HepG2 (cell line): ENCODE measurements at regions of chr1 and their contacts with region 1.

Region 1: DNA sequence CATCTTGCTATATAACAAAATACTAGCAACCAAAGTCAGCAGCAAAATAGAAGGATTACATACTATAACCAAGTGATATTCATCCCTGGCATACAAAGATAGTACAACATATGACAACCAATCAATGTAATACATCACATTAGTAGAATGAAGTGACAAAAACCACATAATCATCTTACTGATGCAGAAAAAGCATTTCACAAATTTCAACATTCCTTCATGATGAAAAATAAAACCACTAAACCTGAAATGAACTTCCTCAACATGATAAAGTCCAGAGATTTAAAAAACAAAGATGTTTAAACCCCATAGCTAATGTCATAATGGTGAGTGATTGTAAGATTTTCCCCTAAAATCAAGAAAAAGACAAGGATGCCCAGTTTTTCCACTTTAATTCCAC is 18.6 kb downstream of the RO60 start:
- DNase-seq: no peak
- ATAC-seq: no peak
- H3K4me3 ChIP-seq: no peak overlapping the region
- H3K27ac ChIP-seq: no peak overlapping the region
- H3K4me1 ChIP-seq: no peaks in the 10 kb centered on the region
- H3K27me3 ChIP-seq: no peaks in the 10 kb centered on the region
- CTCF ChIP-seq: no peak
- EP300 ChIP-seq: no peak
- POLR2A ChIP-seq: no peak
- RAD21 ChIP-seq: no peak

Region 2: GRCh38 chr1:191870490-191870889 is 1207.5 kb before region 1 on chr1:
- CTCF ChIA-PET with region 1: no interaction called
- POLR2A ChIA-PET with region 1: no interaction called
- in situ Hi-C with region 1: no loop called
- intact Hi-C with region 1: loop called (anchors 5 kb)
- DNase-seq: no peak
- ATAC-seq: no peak
- H3K4me3 ChIP-seq: no peak overlapping the region
- H3K27ac ChIP-seq: no peak overlapping the region
- H3K4me1 ChIP-seq: no peaks in the 10 kb centered on the region
- H3K27me3 ChIP-seq: no peaks in the 10 kb centered on the region
- CTCF ChIP-seq: no peak
- EP300 ChIP-seq: no peak
- POLR2A ChIP-seq: no peak
- RAD21 ChIP-seq: no peak